ENCODE measurements at regions of chr4 and their contacts with region 1.

Region 1: GRCh38 chr4:40662962-40663604 is 33.4 kb upstream of the RBM47 start:
- DNase-seq: peak; percentile 79
- H3K4me3 Mint-ChIP-seq: no peak overlapping the region
- H3K27ac Mint-ChIP-seq: peak overlapping the region; percentile 75
- H3K4me1 Mint-ChIP-seq: peaks cover 27% of the 10 kb centered on the region
- H3K27me3 Mint-ChIP-seq: peaks cover 3% of the 10 kb centered on the region

Region 2: DNA sequence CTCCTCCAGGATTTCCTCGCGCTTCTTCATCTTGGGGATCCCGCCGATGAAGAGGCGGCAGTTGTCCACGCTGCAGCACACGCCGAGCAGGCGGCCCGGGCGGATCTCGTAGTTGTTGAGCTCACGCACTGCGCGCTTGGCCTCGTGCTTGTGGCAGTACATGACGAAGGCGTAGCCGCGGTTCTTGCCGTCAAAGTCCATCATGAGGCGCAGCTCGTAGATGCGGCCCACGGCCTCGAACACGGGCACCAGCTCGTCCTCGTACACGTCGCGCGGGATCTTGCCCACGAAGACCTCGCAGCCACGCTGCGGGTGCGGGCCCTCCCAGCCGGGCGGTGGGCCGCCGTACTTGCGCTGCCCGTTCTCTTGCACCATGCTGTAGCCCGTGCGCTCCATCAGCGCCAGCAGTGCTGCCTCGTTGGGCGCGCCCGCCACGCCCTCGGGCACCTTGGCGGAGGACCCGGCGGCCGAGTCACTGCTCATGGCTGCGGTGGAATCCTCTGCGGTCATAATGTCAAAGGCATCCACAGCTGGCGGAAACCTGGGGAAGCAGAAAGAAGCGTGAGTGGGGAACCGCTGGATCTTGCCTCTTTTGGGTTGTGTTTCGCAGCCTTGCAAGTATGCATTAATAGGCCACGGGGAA is 224.6 kb before region 1 on chr4:
- CTCF ChIA-PET with region 1: no interaction called
- POLR2A ChIA-PET with region 1: no interaction called
- intact Hi-C with region 1: loop called (anchors 1 kb)
- DNase-seq: no peak
- H3K4me3 Mint-ChIP-seq: no peak overlapping the region
- H3K27ac Mint-ChIP-seq: no peak overlapping the region
- H3K4me1 Mint-ChIP-seq: peaks cover 15% of the 10 kb centered on the region
- H3K27me3 Mint-ChIP-seq: peaks cover 1% of the 10 kb centered on the region

Region 3: GRCh38 chr4:40515398-40516293 is 147.4 kb before region 1 on chr4:
- CTCF ChIA-PET with region 1: no interaction called
- POLR2A ChIA-PET with region 1: no interaction called
- intact Hi-C with region 1: no loop called
- DNase-seq: peak; percentile 25
- H3K4me3 Mint-ChIP-seq: no peak overlapping the region
- H3K27ac Mint-ChIP-seq: peak overlapping the region; percentile 28
- H3K4me1 Mint-ChIP-seq: peaks cover 17% of the 10 kb centered on the region
- H3K27me3 Mint-ChIP-seq: peaks cover 1% of the 10 kb centered on the region

Region 4: GRCh38 chr4:40621592-40622512 is 41.2 kb before region 1 on chr4:
- CTCF ChIA-PET with region 1: no interaction called
- POLR2A ChIA-PET with region 1: no interaction called
- intact Hi-C with region 1: loop called (anchors 2 kb)
- DNase-seq: peak; percentile 51
- H3K4me3 Mint-ChIP-seq: no peak overlapping the region
- H3K27ac Mint-ChIP-seq: no peak overlapping the region
- H3K4me1 Mint-ChIP-seq: peaks cover 29% of the 10 kb centered on the region
- H3K27me3 Mint-ChIP-seq: peaks cover 35% of the 10 kb centered on the region

Region 5: DNA sequence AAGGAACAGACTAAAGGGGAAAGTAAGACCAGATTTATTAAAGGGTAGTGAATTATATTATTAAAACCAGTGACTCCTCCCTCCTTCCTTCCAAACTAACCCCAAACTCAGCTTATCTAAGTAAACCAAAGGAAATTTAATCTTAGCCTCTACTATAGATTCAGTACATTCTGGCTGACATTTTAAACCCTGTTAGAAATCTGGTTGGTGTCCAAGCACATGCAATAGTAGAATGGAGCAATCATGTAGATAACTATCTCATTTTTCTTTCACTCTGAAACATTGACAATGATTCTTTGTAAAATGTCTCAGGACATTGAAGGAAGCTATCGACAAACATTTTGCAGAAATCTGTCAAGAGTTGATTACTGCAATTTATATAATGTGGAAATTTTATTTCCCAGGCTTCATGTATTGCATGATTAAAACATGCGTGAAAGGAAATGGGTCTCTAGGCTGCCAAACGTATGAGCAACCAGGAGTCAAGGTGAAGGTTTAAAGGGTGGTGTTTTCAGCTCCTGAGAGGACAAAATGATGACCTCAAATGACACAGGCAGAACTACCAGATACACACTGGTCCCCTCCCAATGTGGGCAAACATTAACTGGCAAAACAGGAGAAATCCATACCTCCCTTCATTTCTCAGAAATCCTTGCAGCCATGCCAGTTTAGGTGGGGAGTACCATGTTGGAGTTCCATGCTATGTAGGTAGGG is 24.8 kb after region 1 on chr4:
- CTCF ChIA-PET with region 1: interaction called, 4 read pairs
- POLR2A ChIA-PET with region 1: interaction called, 11 read pairs
- intact Hi-C with region 1: loop called (anchors 1 kb)
- DNase-seq: no peak
- H3K4me3 Mint-ChIP-seq: no peak overlapping the region
- H3K27ac Mint-ChIP-seq: peak overlapping the region; percentile 76
- H3K4me1 Mint-ChIP-seq: peaks cover 14% of the 10 kb centered on the region
- H3K27me3 Mint-ChIP-seq: peaks cover 11% of the 10 kb centered on the region

Region 6: GRCh38 chr4:40763228-40763716 is 100.2 kb after region 1 on chr4:
- CTCF ChIA-PET with region 1: no interaction called
- POLR2A ChIA-PET with region 1: no interaction called
- intact Hi-C with region 1: loop called (anchors 1 kb)
- DNase-seq: peak; percentile 76
- H3K4me3 Mint-ChIP-seq: no peak overlapping the region
- H3K27ac Mint-ChIP-seq: peak overlapping the region; percentile 16
- H3K4me1 Mint-ChIP-seq: peaks cover 11% of the 10 kb centered on the region
- H3K27me3 Mint-ChIP-seq: peaks cover 4% of the 10 kb centered on the region